ENCODE measurements at regions of chr1 and their contacts with region 1.

Region 1: GRCh38 chr1:109213785-109214468 is at the start of gene SARS1:
- DNase-seq: peak; percentile 90
- H3K4me3 Mint-ChIP-seq: peak within 1 kb of the TSS; percentile 100
- H3K27ac Mint-ChIP-seq: peak within 1 kb of the TSS; percentile 100
- H3K4me1 Mint-ChIP-seq: peaks cover 24% of the 10 kb centered on the region
- H3K27me3 Mint-ChIP-seq: no peaks in the 10 kb centered on the region
- total RNA-seq, gene SARS1: 363 TPM

Region 2: GRCh38 chr1:109041621-109042468 is 172.1 kb before region 1 on chr1 and contains the start of gene WDR47:
- CTCF ChIA-PET with region 1: no interaction called
- intact Hi-C with region 1: loop called (anchors 2 kb)
- DNase-seq: peak; percentile 97
- H3K4me3 Mint-ChIP-seq: peak within 1 kb of the TSS; percentile 73
- H3K27ac Mint-ChIP-seq: peak within 1 kb of the TSS; percentile 6
- H3K4me1 Mint-ChIP-seq: peaks cover 12% of the 10 kb centered on the region
- H3K27me3 Mint-ChIP-seq: no peaks in the 10 kb centered on the region
- total RNA-seq, gene WDR47: 8.2 to 8.4 TPM

Region 3: DNA sequence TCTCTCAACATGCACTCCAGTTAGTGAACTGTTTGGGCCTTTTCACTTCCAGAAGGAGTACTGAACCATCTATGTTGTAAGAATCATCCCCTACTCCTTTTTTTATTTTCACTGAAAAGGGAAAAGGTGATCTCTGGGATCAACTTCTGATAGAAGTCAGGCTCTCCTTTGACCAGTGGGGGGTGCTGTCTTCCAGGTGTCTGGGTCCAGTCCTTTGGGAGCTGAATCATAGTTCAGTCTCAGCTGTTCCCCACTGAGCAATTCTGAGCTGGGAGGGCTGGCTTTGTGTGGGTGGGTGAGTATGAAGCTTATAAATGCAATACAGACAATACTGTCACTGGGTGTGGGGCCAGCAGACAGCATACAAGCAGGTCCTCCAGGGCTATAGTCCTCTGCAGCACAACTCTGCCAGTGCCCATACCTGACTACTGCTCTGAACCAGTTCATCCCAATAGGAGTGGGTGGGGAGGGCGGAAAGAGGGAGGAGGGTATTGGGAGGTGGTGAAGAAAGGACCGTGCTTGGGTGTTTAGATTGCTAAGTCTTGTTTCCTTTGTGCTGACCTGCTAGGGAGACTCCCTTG is 12.7 kb before region 1 on chr1:
- CTCF ChIA-PET with region 1: interaction called, 13 read pairs
- intact Hi-C with region 1: loop called (anchors 1 kb)
- DNase-seq: peak; percentile 86
- H3K4me3 Mint-ChIP-seq: no peak overlapping the region
- H3K27ac Mint-ChIP-seq: no peak overlapping the region
- H3K4me1 Mint-ChIP-seq: peaks cover 17% of the 10 kb centered on the region
- H3K27me3 Mint-ChIP-seq: no peaks in the 10 kb centered on the region

Region 4: DNA sequence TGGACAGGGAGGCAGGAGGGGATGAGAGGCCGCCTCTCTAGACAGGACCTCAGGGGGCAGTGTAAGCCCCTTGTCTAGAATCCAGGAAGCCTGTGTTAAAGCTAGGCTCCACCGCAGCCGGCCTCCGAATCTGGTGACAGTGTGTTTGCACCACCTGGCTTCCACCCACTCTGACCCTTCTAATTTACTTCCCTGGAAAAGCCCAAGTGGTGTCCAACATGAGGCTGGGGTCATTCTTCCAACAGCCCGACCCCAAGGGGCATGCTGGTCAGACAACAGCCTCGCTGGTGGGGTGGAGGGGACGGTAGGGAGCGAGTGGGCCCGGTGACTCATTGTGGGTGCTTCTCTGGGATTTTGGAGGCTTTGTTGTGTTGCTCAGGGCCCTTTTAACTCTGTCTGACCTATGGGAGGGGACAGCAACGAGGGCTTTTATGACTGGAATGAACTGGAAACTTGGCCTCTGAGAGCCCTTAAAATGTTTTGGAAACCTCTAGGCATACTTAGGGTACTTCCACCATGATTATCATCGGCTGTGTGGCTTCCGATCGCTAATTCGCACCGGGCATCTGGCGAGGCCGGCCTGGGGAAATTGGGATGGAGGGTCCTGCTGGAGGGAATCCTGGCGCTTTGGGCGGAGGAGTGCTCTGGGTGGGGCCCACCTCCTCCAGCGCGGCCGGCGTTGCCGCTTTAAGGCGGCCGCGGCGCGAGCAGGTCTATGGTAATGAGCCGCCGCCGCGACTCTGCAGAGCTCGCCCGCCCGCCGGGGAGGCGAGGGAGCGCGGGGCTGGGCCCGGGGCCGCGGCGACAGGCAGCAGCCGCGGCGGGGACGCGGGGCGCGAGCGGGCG is 35.1 kb after region 1 on chr1 and contains the start of gene CELSR2:
- CTCF ChIA-PET with region 1: no interaction called
- intact Hi-C with region 1: loop called (anchors 2 kb)
- DNase-seq: peak; percentile 60
- H3K4me3 Mint-ChIP-seq: peak within 1 kb of the TSS; percentile 49
- H3K27ac Mint-ChIP-seq: no peak within 1 kb of the TSS
- H3K4me1 Mint-ChIP-seq: peaks cover 3% of the 10 kb centered on the region
- H3K27me3 Mint-ChIP-seq: no peaks in the 10 kb centered on the region
- total RNA-seq, gene CELSR2: 1.1 to 1.2 TPM

Region 5: DNA sequence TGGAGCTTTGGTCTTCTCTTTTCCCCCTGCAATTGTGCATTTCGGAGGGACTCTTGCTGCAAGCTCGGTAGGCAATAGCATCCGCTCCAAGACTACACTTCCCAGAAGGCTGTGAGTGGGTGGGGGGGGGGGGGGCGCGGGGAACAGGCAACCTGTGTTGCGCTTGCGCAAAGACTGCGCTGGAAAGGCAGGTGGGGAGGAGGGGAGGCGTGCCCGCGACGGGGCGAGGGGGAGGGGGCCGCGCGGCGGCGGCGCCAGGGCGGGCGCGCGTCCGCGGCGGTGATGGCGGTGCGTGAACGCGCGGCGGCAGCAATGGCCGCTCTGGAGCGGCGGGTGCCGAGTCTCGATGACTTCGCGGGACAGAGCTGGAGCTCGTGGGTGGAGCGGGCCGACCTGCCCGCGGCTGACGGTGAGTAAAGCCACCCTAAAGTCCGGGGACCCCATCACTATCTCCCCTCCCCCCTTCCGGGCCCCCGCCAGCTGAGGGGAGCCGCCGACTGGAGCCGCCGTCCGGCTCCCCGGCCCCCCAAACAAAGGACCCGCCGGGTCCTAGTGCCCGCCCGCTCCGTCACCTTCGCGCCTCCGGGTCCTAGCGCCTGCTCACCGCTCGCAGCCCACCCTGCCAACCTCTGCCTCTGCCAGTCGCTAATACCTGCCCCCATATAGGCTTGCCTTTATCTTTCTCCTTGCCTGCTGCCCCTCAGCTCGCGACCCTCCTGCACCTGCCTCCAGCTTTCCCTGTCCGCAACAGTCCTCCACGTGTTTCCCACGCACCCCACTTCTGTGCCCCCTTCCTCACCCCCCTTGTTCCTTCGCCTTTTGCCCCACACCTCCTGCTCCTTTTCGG is 270.0 kb after region 1 on chr1 and contains the start of gene ATXN7L2:
- CTCF ChIA-PET with region 1: no interaction called
- intact Hi-C with region 1: loop called (anchors 1 kb)
- DNase-seq: peak; percentile 93
- H3K4me3 Mint-ChIP-seq: peak within 1 kb of the TSS; percentile 95
- H3K27ac Mint-ChIP-seq: peak within 1 kb of the TSS; percentile 85
- H3K4me1 Mint-ChIP-seq: peaks cover 24% of the 10 kb centered on the region
- H3K27me3 Mint-ChIP-seq: no peaks in the 10 kb centered on the region
- total RNA-seq, gene ATXN7L2: 15.2 to 16.4 TPM